H1 (cell line): ENCODE measurements at regions of chr12 and their contacts with region 1.

Region 1: GRCh38 chr12:132582058-132582420 is 28.3 kb downstream of the LRCOL1 start:
- DNase-seq: peak in 1 of 2 experiments; percentile 84
- H3K4me3 ChIP-seq: peak overlapping the region in 3 of 4 experiments; percentile 10 to 59 (median 15); a peak in 6 of 8 replicates
- H3K27ac ChIP-seq: no peak overlapping the region
- H3K4me1 ChIP-seq: peaks cover 0 to 6% (median 5%) of the 10 kb centered on the region in 4 experiments; a peak in 2 of 7 replicates
- H3K27me3 ChIP-seq: peaks cover 21 to 48% (median 39%) of the 10 kb centered on the region in 4 experiments
- CTCF ChIP-seq: no peak
- EP300 ChIP-seq: no peak
- POLR2A ChIP-seq: no peak
- RAD21 ChIP-seq: no peak

Region 2: DNA sequence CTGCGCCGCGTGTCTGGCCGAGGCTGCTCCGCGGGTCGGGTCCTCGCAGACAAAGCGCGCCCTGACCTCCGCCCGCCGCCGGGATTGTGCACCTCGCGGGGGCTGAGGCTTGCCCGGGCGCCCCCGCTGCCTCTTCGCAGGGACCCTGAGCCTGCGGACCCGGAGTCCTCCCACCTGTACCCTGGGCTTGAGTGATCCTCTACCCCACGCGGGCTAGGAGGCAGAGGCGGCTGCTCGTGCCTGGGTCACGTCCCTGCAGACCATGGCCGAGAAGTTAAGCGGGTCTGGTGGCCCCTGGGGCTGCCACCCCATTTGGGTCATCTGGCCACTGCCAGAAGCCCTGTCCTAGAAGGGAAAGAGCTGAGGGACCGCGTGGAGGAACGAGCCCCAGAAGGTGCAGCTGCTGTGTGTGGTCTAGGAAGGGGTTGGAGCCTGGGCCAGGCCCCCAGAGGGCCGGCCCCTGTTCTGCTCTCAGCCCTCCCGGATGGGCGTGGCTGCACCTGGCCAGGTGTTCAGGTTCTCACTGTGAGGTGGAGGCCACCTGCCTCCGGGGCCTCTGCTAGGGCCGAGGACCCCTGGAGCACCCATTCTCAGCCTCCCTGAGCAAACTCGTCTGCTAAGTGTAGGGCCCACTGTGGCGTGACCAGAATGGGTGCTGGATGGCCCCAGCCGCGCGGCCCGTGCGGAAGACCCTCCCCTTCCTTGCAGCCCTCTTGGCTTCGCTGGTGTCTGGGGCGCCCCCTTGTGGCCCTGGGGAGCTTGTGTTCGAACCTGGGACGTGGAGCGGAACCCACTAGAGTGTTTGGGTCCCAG is 21.2 kb before region 1 on chr12:
- CTCF ChIA-PET with region 1: interaction called, 11 read pairs
- POLR2A ChIA-PET with region 1: interaction called, 60 read pairs
- DNase-seq: peak; percentile 60 to 96
- H3K4me3 ChIP-seq: peak overlapping the region; percentile 79 to 94 (median 90)
- H3K27ac ChIP-seq: peak overlapping the region; percentile 74; the same call in 1 of the 2 replicates
- H3K4me1 ChIP-seq: peaks cover 0 to 10% (median 6%) of the 10 kb centered on the region in 4 experiments; a peak in 5 of 7 replicates
- H3K27me3 ChIP-seq: peaks cover 8 to 39% (median 32%) of the 10 kb centered on the region in 4 experiments
- CTCF ChIP-seq: peak in 2 of 3 experiments; percentile 88 to 91; a peak in 3 of 4 replicates
- EP300 ChIP-seq: no peak
- POLR2A ChIP-seq: peak in 1 of 2 experiments; percentile 63; a peak in 2 of 3 replicates
- RAD21 ChIP-seq: peak; percentile 34 to 53; a peak in 3 of 4 replicates

Region 3: GRCh38 chr12:132566516-132567131 is 15.4 kb before region 1 on chr12:
- CTCF ChIA-PET with region 1: interaction called, 8 read pairs
- POLR2A ChIA-PET with region 1: interaction called, 60 read pairs
- DNase-seq: no peak
- H3K4me3 ChIP-seq: no peak overlapping the region
- H3K27ac ChIP-seq: no peak overlapping the region
- H3K4me1 ChIP-seq: peaks cover 0 to 6% (median 4%) of the 10 kb centered on the region in 4 experiments; a peak in 5 of 7 replicates
- H3K27me3 ChIP-seq: peaks cover 0 to 5% (median 1%) of the 10 kb centered on the region in 4 experiments; a peak in 3 of 7 replicates
- CTCF ChIP-seq: no peak
- EP300 ChIP-seq: no peak
- POLR2A ChIP-seq: no peak
- RAD21 ChIP-seq: no peak

Region 4: DNA sequence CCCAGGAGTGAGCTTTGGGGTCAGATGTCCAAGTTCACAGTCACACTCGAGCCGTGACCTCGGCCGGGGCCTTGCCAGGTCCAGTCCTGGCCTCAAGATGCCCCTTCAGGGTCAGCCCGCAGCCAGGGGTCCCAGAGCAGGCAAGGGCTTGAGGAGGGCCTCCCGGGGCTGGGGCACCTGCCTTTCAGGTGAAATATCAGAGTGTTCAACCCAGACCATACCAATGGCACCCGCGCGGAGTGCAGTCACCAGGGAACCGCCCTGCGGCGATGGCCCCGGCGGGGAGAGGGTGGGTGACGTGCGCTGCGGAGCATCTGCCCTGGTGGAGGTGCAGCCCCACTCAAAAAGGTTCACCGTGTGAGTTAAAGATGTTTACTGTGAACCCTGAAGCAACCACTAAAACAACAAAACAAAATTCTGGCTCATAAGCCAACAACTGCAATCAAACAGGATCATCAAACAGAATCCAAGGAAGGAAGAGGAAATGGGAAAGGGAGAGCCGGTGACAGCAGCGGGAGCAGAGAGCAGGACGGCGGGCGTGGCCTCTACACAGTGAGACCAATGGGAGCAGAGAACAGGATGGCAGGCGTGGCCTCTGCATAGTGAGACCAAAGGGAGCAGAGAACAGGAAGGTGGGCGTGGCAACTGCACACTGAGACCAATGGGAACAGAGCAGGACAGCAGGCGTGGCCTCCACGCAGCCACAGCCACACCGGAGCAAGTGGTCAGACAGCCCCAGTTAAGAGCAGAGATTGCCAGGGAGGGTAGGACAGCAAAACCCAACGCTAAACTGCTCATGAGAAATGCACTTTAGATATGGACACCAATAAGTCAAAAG is 11.7 kb after region 1 on chr12:
- CTCF ChIA-PET with region 1: no interaction called
- POLR2A ChIA-PET with region 1: interaction called, 20 read pairs
- DNase-seq: peak in 1 of 2 experiments; percentile 77
- H3K4me3 ChIP-seq: no peak overlapping the region
- H3K27ac ChIP-seq: no peak overlapping the region
- H3K4me1 ChIP-seq: no peaks in the 10 kb centered on the region
- H3K27me3 ChIP-seq: peaks cover 27 to 62% (median 60%) of the 10 kb centered on the region in 4 experiments
- CTCF ChIP-seq: no peak
- EP300 ChIP-seq: no peak
- POLR2A ChIP-seq: no peak
- RAD21 ChIP-seq: no peak